ENCODE measurements at regions of chr17 and their contacts with region 1.

Region 1: DNA sequence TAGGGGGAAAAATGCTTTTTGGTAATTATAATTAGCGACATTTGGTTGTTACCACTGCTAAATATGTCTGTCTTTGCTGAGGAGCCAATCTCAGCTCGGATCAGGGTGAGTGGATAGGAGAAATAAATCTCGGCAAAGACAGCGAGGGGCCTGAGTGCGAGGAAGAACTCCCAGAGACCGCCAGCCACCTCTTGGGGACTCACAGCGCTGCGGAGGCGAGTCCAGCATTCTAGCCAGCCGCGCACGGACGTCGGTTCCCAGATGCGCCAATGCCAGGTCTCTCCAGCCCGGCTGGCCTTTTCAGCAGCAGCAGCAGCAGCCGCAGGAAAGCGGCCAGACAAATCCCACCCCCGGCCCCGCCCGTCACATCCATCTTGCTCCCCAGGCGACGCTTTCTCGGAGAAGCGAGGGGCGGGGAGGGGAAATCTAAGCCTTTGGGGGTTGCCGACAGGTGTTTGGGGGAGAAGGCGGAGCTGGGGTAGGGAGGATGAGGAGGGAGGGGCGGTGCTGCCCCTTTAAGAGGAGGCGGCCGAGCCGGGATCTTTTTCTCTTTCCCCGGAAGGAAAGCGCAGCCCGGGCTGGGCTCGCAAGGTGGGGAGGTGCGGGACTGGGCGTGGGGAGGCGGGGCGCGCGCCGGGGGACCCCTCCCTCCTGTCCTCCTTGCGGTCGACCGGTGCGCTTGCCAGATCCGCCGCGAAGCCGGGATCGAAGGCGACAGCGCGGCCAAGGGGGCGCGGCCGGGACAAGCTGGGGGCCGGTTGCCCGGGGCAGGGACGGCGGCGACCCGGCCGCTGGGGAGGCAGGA is at the start of gene ITGA3:
- DNase-seq: peak; percentile 72
- ATAC-seq: peak; percentile 17
- H3K4me3 Mint-ChIP-seq: peak within 1 kb of the TSS; percentile 82
- H3K27ac Mint-ChIP-seq: peak within 1 kb of the TSS; percentile 25
- H3K4me1 Mint-ChIP-seq: peaks cover 33% of the 10 kb centered on the region
- H3K27me3 Mint-ChIP-seq: peaks cover 4% of the 10 kb centered on the region
- total RNA-seq, gene ITGA3: 6.8 to 7.8 TPM

Region 2: GRCh38 chr17:49968380-49969133 is 87.1 kb before region 1 on chr17:
- CTCF ChIA-PET with region 1: no interaction called
- POLR2A ChIA-PET with region 1: no interaction called
- intact Hi-C with region 1: loop called in 1 of 2 experiments (anchors 1 kb)
- DNase-seq: peak; percentile 85
- ATAC-seq: peak; percentile 83
- H3K4me3 Mint-ChIP-seq: peak overlapping the region; percentile 82
- H3K27ac Mint-ChIP-seq: peak overlapping the region; percentile 61
- H3K4me1 Mint-ChIP-seq: peaks cover 34% of the 10 kb centered on the region
- H3K27me3 Mint-ChIP-seq: peaks cover 70% of the 10 kb centered on the region

Region 3: DNA sequence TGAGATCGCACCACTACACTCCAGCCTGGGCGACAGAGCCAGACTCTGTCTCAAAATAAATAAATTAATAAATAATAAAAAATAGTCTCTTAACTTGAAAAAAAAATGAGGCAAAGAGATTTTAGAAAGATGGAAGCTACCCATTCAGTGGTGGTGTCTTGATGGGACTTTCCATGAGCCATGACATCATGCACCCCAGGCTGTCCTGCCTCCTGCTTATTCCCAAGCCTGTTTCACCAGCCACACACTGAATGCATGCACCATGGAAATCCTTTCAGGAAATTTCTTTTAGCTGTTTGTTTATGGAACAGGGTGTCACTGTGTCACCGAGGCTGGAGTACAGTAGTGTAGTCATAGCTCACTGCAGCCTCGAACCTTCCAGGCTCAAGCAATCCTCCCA is 51.7 kb before region 1 on chr17:
- CTCF ChIA-PET with region 1: no interaction called
- POLR2A ChIA-PET with region 1: no interaction called
- intact Hi-C with region 1: no loop called
- DNase-seq: no peak
- ATAC-seq: no peak
- H3K4me3 Mint-ChIP-seq: no peak overlapping the region
- H3K27ac Mint-ChIP-seq: no peak overlapping the region
- H3K4me1 Mint-ChIP-seq: no peaks in the 10 kb centered on the region
- H3K27me3 Mint-ChIP-seq: peaks cover 34% of the 10 kb centered on the region

Region 4: GRCh38 chr17:50026901-50027630 is 28.6 kb before region 1 on chr17:
- CTCF ChIA-PET with region 1: interaction called, 5 read pairs
- POLR2A ChIA-PET with region 1: interaction called, 4 read pairs
- intact Hi-C with region 1: loop called (anchors 1 kb)
- DNase-seq: peak; percentile 86
- ATAC-seq: peak; percentile 71
- H3K4me3 Mint-ChIP-seq: no peak overlapping the region
- H3K27ac Mint-ChIP-seq: no peak overlapping the region
- H3K4me1 Mint-ChIP-seq: peaks cover 11% of the 10 kb centered on the region
- H3K27me3 Mint-ChIP-seq: peaks cover 25% of the 10 kb centered on the region

Measured in activated CD4-positive, alpha-beta T cell treated with anti-CD3 and anti-CD28 coated beads for 36 hours (primary cell).